ENCODE measurements at regions of chr10 and their contacts with region 1.

Region 1: DNA sequence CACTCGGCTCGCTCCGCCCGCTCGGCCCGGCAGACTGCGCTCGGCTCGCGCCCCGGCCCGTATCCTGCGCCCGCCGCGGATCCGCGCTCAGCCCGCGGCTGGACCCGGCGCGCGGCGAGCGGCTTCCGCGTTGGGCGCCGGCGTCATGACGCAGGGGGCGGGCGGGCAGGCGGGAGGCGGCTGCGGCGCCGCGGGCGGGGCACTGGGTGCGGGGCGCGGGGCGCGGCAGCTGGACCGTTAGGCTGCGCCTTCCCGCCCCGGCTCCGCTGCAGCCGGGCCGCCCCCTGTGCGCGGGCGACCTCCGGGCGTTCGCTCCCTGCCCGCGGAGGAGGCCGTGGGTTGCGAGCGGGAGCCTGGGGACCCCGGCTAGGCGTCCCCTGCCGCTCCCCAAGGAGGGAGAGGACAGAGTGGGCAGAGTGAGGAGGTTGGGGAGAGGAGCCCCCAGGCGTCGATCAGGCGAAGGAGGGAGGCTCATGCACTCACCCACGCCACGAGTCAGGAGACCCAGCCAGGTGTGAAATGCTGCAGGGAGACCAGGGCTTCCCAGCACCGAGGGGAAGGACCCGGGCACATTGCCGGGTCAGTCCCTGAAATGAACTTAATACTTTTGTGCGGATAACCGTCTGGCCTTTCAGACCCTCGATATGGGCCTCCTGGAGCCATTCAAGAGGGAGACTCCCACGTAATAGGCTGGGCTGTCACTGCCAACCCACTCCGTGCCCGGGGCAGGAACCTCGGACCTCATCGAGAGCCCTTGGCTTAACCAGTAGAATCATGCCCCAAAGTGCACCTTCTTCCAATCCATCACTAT is at the start of gene PIP4K2A:
- DNase-seq: peak; percentile 82
- H3K4me3 Mint-ChIP-seq: peak within 1 kb of the TSS; percentile 89
- H3K27ac Mint-ChIP-seq: peak within 1 kb of the TSS; percentile 91
- H3K4me1 Mint-ChIP-seq: peaks cover 28% of the 10 kb centered on the region
- H3K27me3 Mint-ChIP-seq: no peaks in the 10 kb centered on the region
- total RNA-seq, gene PIP4K2A: 107 to 108 TPM

Region 2: DNA sequence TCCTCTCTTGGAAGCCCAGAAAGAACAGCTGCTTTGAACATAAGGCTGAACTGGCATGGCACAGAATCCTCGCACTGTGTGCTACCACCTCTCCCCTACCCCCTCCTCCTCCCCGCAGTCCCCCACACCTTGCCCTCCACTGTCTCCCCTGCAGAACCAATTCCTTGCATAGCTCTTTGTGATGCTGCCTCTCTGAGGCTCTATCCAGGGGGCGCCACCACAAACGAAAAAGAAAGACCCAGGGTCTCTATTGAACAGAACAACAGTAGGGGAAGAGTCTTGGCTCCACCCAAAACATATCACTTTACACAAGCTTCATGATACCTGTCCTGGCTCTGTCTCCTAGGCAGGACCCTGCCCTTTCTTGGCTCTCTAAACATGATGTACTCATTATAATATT is 470.7 kb before region 1 on chr10:
- CTCF ChIA-PET with region 1: no interaction called
- POLR2A ChIA-PET with region 1: no interaction called
- intact Hi-C with region 1: loop called (anchors 5 kb)
- DNase-seq: peak; percentile 17
- H3K4me3 Mint-ChIP-seq: no peak overlapping the region
- H3K27ac Mint-ChIP-seq: no peak overlapping the region
- H3K4me1 Mint-ChIP-seq: peaks cover 39% of the 10 kb centered on the region
- H3K27me3 Mint-ChIP-seq: peaks cover 4% of the 10 kb centered on the region

Region 3: DNA sequence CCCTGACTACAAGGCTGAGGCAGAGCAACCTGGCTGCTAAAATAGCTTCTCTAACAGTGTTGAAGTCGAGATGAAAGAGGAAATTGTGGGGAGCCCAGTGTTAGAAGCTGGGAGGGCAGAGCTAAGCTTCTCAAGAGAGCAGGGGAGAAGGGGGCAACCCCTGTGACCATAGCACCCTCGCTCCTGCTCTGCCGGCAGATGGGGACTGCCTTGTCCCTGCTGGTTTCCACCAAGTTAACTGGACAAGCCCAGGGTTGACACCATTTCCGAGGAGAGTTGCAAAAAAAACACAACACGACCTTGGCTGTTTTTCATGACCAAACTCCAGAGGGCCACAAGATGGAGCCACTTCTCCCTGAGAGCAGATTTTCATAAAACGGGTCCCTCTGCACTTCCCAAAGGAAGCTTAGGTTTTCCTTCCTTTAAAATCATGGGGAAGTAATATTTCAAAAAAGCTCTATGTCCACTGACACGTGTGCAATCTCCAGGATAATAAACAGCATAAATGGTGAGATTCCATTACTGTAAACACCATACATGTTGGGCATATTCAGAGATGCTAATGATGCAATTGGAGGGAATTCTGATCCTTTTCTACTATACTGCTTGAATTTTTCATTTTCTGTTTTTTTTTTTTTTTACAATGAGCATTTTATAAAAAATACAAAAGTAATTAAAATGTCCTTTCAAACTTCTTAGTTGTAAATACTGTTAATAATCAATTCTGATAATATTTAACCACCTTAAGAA is 140.7 kb before region 1 on chr10:
- CTCF ChIA-PET with region 1: interaction called, 8 read pairs
- POLR2A ChIA-PET with region 1: interaction called, 4 read pairs
- intact Hi-C with region 1: loop called (anchors 2 kb)
- DNase-seq: peak; percentile 40
- H3K4me3 Mint-ChIP-seq: no peak overlapping the region
- H3K27ac Mint-ChIP-seq: peak overlapping the region; percentile 54
- H3K4me1 Mint-ChIP-seq: peaks cover 56% of the 10 kb centered on the region
- H3K27me3 Mint-ChIP-seq: no peaks in the 10 kb centered on the region

Region 4: GRCh38 chr10:22630234-22631174 is 84.2 kb before region 1 on chr10:
- CTCF ChIA-PET with region 1: no interaction called
- POLR2A ChIA-PET with region 1: interaction called, 24 read pairs
- intact Hi-C with region 1: loop called (anchors 1 kb)
- DNase-seq: peak; percentile 64
- H3K4me3 Mint-ChIP-seq: peak overlapping the region; percentile 72
- H3K27ac Mint-ChIP-seq: peak overlapping the region; percentile 98
- H3K4me1 Mint-ChIP-seq: peaks cover 92% of the 10 kb centered on the region
- H3K27me3 Mint-ChIP-seq: no peaks in the 10 kb centered on the region

Region 5: GRCh38 chr10:22655311-22655981 is 59.2 kb before region 1 on chr10:
- CTCF ChIA-PET with region 1: interaction called, 8 read pairs
- POLR2A ChIA-PET with region 1: interaction called, 15 read pairs
- intact Hi-C with region 1: no loop called
- DNase-seq: peak; percentile 63
- H3K4me3 Mint-ChIP-seq: peak overlapping the region; percentile 60
- H3K27ac Mint-ChIP-seq: peak overlapping the region; percentile 84
- H3K4me1 Mint-ChIP-seq: peaks cover 95% of the 10 kb centered on the region
- H3K27me3 Mint-ChIP-seq: no peaks in the 10 kb centered on the region

Region 6: DNA sequence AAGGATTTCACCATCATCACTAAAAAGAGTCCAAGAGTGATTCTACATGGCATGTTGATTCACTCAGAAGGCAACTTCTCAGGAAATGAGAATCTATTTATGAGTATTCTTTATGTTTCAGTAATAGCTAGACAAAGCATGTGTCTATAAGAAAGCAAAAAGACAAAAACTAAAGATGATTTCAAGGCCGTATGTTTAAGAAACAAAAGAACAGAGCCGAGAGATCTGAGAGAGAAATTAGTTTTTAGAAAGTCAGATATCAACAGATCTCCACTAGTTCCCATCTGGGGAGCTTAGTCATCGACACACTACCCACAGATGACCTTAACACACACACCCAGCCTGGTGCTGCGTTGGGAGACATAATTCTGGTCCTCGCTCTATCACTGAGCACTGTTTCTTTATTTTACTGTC is 21.3 kb before region 1 on chr10:
- CTCF ChIA-PET with region 1: interaction called, 7 read pairs
- POLR2A ChIA-PET with region 1: interaction called, 6 read pairs
- intact Hi-C with region 1: loop called (anchors 1 kb)
- DNase-seq: peak; percentile 62
- H3K4me3 Mint-ChIP-seq: peak overlapping the region; percentile 55
- H3K27ac Mint-ChIP-seq: peak overlapping the region; percentile 95
- H3K4me1 Mint-ChIP-seq: peaks cover 93% of the 10 kb centered on the region
- H3K27me3 Mint-ChIP-seq: no peaks in the 10 kb centered on the region

Region 7: DNA sequence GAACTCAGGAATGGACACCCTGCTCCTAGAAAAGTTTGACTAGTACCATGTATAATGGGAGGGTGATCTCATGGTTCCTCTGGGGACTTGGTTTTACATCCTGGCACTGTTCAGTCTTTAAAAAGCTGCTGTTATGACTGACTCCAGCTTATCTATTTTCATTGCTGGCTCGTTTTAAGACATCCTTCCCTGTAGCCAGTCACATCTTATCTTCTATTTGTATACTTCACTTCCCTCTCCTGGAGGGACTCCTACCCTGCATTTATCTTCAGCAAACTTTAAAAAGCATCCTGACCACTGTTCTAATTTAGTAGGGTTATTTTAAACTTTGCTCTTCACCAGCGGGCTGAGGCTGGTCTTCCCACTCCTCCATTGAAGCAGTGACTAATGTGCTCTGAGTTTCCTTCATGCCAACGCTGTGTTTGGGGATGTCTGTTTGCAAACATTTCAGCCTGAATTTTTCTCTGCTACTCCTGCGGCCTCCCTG is 140.3 kb after region 1 on chr10:
- CTCF ChIA-PET with region 1: no interaction called
- POLR2A ChIA-PET with region 1: no interaction called
- intact Hi-C with region 1: no loop called
- DNase-seq: no peak
- H3K4me3 Mint-ChIP-seq: no peak overlapping the region
- H3K27ac Mint-ChIP-seq: no peak overlapping the region
- H3K4me1 Mint-ChIP-seq: no peaks in the 10 kb centered on the region
- H3K27me3 Mint-ChIP-seq: no peaks in the 10 kb centered on the region